ENCODE measurements at regions of chr1 and their contacts with region 1.

Region 1: DNA sequence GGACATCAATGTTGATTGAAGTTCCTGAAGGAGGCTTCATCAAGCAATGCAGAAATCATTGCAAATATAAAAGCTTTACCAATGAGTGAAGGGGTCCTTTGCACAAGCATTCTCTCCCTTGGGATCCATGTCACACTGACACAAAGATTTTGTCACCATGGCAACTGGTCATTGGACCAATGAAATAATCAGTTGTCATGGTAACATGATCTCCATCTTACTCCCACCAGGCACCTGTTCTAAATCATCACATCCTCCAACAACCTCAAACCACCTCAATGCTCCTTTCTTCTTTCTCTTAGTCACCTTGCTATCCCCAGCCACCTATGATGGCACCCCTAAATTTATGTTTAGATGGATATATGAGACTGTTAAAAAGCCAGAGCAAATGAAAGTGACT is 13.5 kb upstream of the FOXJ3 start:
- DNase-seq: no peak
- ATAC-seq: no peak
- H3K4me3 ChIP-seq: no peak overlapping the region
- H3K27ac ChIP-seq: no peak overlapping the region
- H3K4me1 ChIP-seq: no peaks in the 10 kb centered on the region
- H3K27me3 ChIP-seq: no peaks in the 10 kb centered on the region

Region 2: DNA sequence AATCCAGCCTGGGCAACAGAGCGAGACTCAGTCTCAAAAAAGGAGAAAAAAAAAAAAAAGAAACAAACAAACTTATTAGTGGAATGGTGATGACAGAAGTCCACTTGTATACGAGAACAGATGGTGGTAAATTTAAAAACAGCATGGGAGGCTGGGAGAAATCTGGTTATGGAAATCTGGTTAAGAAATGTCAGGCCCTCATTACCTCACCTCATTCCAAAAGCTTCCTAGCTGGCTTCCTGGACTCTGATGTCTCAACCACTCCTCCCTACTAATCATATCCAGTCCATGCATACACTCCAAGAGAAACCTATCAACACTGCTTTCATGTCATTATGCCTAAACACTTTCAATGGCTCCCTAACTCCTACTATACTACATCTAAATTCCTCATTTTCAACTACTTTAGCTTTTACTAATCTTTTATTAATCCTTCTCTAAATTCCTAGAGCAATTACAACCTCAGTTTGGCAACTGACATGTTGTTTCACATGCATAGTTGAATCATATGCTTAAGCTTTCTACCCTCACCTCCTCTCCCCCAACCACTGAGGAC is 66.4 kb before region 1 on chr1:
- intact Hi-C with region 1: no loop called
- DNase-seq: no peak
- ATAC-seq: no peak
- H3K4me3 ChIP-seq: no peak overlapping the region
- H3K27ac ChIP-seq: no peak overlapping the region
- H3K4me1 ChIP-seq: peaks cover 4 to 11% of the 10 kb centered on the region in 2 donors
- H3K27me3 ChIP-seq: no peaks in the 10 kb centered on the region

Region 3: DNA sequence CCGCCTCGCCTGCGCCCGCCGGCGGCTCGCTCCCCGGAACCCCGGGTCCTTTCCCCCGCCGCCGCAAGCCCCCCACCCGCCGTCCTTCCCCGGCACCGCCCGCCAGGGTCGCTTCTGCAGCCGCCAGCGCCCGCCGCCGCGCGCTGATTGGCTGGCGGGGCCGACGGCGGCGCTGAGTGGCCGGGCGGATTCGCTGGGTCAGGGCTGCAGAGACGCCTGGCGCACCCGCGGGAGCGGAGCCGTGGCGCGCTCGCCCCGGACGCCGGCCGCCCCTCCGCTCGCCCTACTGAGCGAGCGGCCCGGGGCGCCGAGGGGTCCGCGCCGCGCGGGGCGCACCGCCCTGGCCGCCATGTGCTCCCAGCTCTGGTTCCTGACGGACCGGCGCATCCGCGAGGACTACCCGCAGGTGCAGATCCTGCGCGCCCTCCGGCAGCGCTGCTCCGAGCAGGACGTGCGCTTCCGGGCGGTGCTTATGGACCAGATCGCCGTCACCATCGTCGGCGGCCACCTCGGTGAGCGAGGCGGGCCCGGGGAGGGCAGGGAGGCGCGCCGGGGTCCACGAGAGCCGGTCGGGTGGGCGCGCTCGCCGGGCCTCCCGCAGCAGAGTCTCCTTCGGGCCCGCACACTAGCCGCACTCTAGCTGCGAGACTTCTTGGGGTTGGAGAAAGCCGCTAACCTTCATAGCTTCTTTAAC is 32.2 kb after region 1 on chr1 and contains the start of gene RIMKLA:
- intact Hi-C with region 1: no loop called
- DNase-seq: peak; percentile 48 to 81
- ATAC-seq: peak; percentile 66
- H3K4me3 ChIP-seq: peak within 1 kb of the TSS; percentile 59 to 64
- H3K27ac ChIP-seq: no peak within 1 kb of the TSS
- H3K4me1 ChIP-seq: no peaks in the 10 kb centered on the region
- H3K27me3 ChIP-seq: no peaks in the 10 kb centered on the region
- total RNA-seq, gene RIMKLA: 0.06 to 1.3 TPM

Region 4: DNA sequence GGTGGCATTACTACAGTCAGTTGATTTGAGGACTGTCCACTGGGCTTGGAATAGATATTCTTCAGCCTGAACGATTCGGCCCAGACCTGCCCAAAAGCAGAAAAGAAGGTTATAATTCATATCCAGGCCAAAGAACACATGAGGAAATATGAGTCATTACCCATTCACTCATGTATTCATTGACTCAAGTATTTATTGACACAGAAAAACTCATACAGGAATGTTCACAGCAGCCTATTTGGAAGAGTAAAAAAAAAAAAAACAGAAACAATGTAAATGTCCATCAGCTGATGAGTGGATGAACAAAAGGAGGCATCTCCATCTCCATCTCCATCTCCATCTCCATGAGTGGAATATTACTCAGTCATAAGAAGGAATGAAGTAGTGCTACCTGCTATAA is 91.4 kb after region 1 on chr1:
- intact Hi-C with region 1: loop called in 1 of 2 experiments (anchors 5 kb)
- DNase-seq: no peak
- ATAC-seq: no peak
- H3K4me3 ChIP-seq: no peak overlapping the region
- H3K27ac ChIP-seq: no peak overlapping the region
- H3K4me1 ChIP-seq: no peaks in the 10 kb centered on the region
- H3K27me3 ChIP-seq: no peaks in the 10 kb centered on the region

Region 5: GRCh38 chr1:42613803-42614131 is 265.3 kb after region 1 on chr1:
- intact Hi-C with region 1: no loop called
- DNase-seq: no peak
- ATAC-seq: no peak
- H3K4me3 ChIP-seq: no peak overlapping the region
- H3K27ac ChIP-seq: no peak overlapping the region
- H3K4me1 ChIP-seq: no peaks in the 10 kb centered on the region
- H3K27me3 ChIP-seq: no peaks in the 10 kb centered on the region

Measured in aorta (tissue), 5 donors.